Astrocyte of the cerebellum (primary cell): ENCODE measurements at regions of chr11 and their contacts with region 1.

Region 1: GRCh38 chr11:19561011-19561410 is 151.6 kb upstream of the NAV2 start:
- DNase-seq: no peak
- H3K4me3 ChIP-seq: no peak overlapping the region
- CTCF ChIP-seq: no peak

Region 2: GRCh38 chr11:19723572-19724342 is 162.7 kb after region 1 on chr11:
- in situ Hi-C with region 1: loop called (anchors 10 kb)
- DNase-seq: no peak
- H3K4me3 ChIP-seq: no peak overlapping the region
- CTCF ChIP-seq: no peak